MCF 10A (cell line): ENCODE measurements at regions of chr6 and their contacts with region 1.

Region 1: GRCh38 chr6:153002607-153003365 is at the start of gene MTRF1L:
- DNase-seq: peak; percentile 97
- H3K4me3 Mint-ChIP-seq: peak within 1 kb of the TSS; percentile 99
- H3K27ac Mint-ChIP-seq: peak within 1 kb of the TSS; percentile 97
- H3K4me1 Mint-ChIP-seq: peaks cover 29% of the 10 kb centered on the region
- H3K27me3 Mint-ChIP-seq: no peaks in the 10 kb centered on the region
- CTCF ChIP-seq: no peak
- total RNA-seq, gene MTRF1L: 25.5 and 30.9 TPM in 2 replicates

Region 2: DNA sequence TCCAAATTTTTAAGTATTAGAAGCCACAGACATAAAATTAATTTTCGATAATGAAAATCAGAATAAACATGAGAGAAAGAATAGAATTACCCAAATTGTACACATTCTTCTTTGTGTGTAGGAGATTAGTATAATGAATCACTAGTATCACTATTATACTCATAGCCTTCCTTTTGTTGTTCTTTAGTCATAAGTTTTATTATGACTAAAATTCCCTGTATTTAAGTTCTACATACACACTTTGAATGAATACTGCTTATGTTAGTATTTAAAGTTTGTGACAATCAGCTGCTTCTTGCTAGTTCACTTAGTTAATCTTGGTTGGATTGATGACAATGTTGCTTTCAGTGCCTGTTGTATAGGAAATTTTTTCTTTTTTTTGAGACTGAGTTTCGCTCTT is 1436.2 kb before region 1 on chr6:
- CTCF ChIA-PET with region 1: no interaction called
- POLR2A ChIA-PET with region 1: no interaction called
- intact Hi-C with region 1: no loop called
- DNase-seq: no peak
- H3K4me3 Mint-ChIP-seq: no peak overlapping the region
- H3K27ac Mint-ChIP-seq: no peak overlapping the region
- H3K4me1 Mint-ChIP-seq: no peaks in the 10 kb centered on the region
- H3K27me3 Mint-ChIP-seq: no peaks in the 10 kb centered on the region
- CTCF ChIP-seq: no peak

Region 3: GRCh38 chr6:152975204-152975915 is 27.4 kb before region 1 on chr6:
- CTCF ChIA-PET with region 1: interaction called, 3 read pairs
- POLR2A ChIA-PET with region 1: interaction called, 42 read pairs
- intact Hi-C with region 1: no loop called
- DNase-seq: peak; percentile 34
- H3K4me3 Mint-ChIP-seq: no peak overlapping the region
- H3K27ac Mint-ChIP-seq: peak overlapping the region; percentile 67
- H3K4me1 Mint-ChIP-seq: peaks cover 33% of the 10 kb centered on the region
- H3K27me3 Mint-ChIP-seq: no peaks in the 10 kb centered on the region
- CTCF ChIP-seq: no peak

Region 4: DNA sequence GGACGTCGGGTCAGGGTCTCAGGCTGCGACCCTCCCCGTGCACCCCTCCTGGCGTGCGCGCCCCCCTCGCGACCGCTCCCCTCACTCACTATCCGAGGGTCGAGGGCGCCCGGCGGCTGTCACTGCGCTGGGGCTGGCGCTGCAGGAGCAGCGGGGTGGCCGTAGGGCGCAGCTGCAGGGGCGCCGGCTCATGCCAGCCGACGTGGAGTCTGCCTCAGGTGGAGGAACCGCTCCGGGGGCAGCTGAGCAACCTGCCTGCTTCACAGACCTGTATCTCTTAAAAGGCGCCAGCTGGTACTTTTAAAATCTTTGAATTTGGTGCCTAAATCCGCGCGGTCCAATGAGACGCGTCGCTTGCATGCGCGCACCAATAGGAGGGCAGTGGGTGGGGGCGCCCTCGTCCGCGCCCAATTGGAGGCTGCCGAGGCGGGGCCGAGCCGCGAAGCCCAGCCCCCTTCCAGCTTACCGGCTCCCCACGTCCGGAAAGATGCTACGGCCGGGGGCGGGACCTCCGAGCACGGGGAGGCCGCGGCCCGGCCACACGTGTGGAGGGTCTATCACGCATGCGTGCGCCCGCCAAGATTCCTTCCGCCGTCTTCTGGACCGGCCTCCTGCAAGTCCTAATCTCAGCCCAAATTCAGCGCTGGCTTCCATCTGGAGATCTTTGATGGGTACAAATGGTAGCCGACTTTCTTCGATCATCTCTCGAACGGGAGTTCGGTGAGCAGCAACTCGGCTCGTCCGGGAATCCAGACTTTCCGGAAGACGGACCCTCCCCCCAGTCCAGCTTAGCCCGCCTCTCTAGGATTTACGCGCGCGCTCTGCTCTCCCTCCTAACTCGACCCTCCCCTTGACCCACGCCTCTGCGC is 19.8 kb before region 1 on chr6 and contains the start of gene FBXO5:
- CTCF ChIA-PET with region 1: no interaction called
- POLR2A ChIA-PET with region 1: interaction called, 100 read pairs
- intact Hi-C with region 1: no loop called
- DNase-seq: peak; percentile 97
- H3K4me3 Mint-ChIP-seq: peak within 1 kb of the TSS; percentile 87
- H3K27ac Mint-ChIP-seq: peak within 1 kb of the TSS; percentile 89
- H3K4me1 Mint-ChIP-seq: peaks cover 28% of the 10 kb centered on the region
- H3K27me3 Mint-ChIP-seq: no peaks in the 10 kb centered on the region
- CTCF ChIP-seq: no peak
- total RNA-seq, gene FBXO5: 9.5 and 16.4 TPM in 2 replicates